GM10248 (cell line): ENCODE measurements at regions of chr1 and their contacts with region 1.

Region 1: GRCh38 chr1:67149179-67149770 is 14.5 kb upstream of the C1orf141 start:
- DNase-seq: peak; percentile 73
- CTCF ChIP-seq: peak; percentile 65

Region 2: DNA sequence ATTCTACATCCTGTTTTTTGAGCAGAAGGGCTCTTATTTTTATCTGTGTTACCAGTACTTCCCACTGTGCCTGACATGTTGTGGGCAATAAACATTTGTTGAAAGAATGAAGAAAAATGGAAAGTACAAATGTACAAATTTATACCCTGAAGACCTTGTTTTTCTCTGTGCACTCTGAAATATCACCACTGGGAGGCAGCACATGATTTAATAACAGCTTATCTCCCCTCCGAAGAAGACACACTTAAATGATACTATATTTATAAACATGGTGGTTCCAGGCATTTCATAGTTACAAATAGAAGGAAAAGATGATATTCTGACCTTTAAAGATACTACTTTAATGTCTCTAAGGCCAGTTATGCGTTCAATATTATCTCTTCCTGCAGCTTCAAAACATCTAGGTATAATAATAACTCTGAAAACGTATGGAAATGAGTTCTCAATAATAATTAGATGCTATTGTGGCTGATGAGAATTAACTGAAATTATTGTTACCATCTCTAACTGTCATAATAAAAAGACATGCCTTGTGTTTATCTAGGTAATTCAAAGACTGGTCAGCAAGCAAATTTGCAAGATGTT is 384.2 kb before region 1 on chr1:
- CTCF ChIA-PET with region 1: interaction called, 40 read pairs
- POLR2A ChIA-PET with region 1: no interaction called
- DNase-seq: peak; percentile 39
- CTCF ChIP-seq: peak; percentile 71

Region 3: DNA sequence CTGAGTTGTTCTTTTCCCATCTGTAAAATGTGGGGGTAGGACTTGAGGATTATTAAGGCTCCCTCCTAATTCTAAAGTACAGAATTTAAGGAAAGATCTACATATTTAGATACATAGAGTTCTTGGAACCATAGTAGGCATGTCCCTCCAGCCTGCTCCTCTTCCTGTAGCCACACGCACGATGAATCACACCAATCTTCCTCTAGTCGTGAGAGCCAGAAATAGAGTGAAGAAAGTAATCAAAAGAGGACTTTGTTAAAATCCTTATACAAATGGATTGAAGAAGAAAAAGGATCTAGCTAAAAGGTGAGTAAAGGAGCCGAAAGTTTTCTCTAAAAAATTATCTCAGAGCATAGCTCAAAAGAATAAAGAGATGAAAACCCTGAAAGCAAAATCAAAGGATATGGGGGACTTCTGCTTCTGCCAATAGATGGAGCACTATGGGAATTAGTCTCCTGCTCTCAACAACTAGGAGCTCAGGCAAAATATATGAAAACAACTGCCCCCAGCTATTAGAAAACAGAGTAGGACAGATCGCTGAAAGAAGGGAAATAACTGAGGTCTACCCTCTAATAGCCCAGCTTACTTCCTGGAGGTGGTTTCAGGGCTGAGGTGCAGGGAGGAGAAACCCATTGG is 23.0 kb before region 1 on chr1:
- CTCF ChIA-PET with region 1: interaction called, 11 read pairs
- POLR2A ChIA-PET with region 1: no interaction called
- DNase-seq: no peak
- CTCF ChIP-seq: no peak

Region 4: GRCh38 chr1:67162957-67163356 is 13.7 kb after region 1 on chr1:
- CTCF ChIA-PET with region 1: interaction called, 21 read pairs
- POLR2A ChIA-PET with region 1: no interaction called
- DNase-seq: peak; percentile 15
- CTCF ChIP-seq: no peak

Region 5: DNA sequence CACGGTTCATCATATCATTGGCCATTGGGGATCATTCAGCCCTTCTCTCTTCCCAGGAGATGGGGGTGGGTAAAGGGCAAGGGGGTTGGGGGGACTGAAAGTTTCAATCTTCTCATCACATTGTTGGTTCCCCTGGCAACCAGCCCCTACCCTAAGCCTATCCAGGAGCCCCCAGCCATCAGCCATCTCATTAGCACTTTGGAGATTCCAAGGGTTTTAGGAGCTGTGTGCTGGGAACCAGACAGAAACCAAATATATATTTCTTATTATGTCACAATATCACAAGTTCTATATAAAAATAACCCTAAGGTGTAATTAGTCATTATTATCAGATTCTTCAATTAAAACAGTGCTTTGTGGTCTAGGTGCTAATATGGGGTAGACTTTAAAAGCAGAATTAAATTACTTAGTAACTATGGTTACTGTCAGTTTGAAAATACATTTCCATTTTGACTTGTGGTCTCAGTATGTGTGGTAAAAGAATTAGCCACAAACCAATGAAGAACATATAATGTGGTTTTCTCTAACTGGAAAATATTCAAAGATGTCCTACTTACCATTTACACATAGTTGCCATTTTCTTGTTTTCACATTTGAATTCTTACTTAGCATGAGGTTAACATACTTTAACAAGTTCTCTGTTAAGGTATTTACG is 45.1 kb after region 1 on chr1:
- CTCF ChIA-PET with region 1: interaction called, 12 read pairs
- POLR2A ChIA-PET with region 1: no interaction called
- DNase-seq: peak; percentile 29
- CTCF ChIP-seq: no peak